PC-3 (cell line): ENCODE measurements at regions of chr6 and their contacts with region 1.

Region 1: GRCh38 chr6:55678330-55679224 is 99.6 kb upstream of the HMGCLL1 start:
- DNase-seq: no peak
- ATAC-seq: no peak
- H3K4me3 ChIP-seq: no peak overlapping the region
- H3K27ac ChIP-seq: no peak overlapping the region
- H3K4me1 ChIP-seq: peaks cover 8% of the 10 kb centered on the region
- H3K27me3 ChIP-seq: no peaks in the 10 kb centered on the region
- CTCF ChIP-seq: no peak

Region 2: DNA sequence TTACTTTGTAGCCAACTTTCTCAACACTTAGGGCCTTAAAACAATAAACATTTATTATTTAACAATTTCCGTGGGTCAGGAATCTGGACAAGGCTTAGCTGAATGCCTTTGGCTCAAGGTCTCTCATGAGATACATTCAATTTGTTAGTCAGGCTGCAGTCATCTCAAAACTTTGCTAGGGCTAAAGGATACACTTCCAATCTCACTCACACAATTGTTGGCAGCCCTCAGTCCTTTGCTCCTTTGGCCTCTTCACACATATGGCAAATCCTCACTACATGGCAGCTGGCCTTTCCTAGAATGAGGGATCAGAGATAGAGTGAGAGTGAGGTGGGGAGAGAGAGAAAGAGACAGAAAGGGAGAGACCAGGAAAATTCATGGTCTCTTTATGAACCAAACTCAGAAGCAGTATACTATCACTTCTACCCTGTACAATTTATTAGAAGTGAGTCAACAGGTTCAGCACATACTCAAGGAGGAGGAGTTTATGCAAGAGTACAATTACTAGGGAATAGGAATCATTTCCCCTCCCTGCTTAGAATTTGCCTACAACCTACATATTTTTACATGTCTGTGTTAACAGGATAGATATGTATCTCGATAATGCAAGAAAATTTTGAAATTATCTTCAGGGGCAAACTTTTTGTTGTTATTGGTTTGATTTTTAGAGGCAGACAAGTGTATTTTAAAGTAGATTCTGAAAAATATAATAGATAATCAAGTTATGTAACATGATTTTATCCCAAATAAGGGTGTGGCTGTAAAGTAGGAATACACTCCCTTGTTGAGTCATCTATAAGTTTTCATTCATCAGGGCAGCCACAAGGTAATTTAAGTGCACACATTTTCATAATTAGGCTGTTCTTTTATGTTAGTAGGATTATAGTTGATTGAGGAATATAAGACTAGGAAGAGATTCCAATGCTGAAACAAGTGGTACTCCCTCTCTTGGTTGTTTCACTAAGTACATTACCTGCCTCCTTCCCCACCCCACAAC is 13.7 kb before region 1 on chr6:
- CTCF ChIA-PET with region 1: no interaction called
- POLR2A ChIA-PET with region 1: no interaction called
- intact Hi-C with region 1: no loop called
- DNase-seq: peak; percentile 72
- ATAC-seq: peak; percentile 99
- H3K4me3 ChIP-seq: peak overlapping the region; percentile 13; the same call in 1 of the 2 replicates
- H3K27ac ChIP-seq: peak overlapping the region; percentile 85
- H3K4me1 ChIP-seq: peaks cover 15% of the 10 kb centered on the region
- H3K27me3 ChIP-seq: no peaks in the 10 kb centered on the region
- CTCF ChIP-seq: no peak

Region 3: DNA sequence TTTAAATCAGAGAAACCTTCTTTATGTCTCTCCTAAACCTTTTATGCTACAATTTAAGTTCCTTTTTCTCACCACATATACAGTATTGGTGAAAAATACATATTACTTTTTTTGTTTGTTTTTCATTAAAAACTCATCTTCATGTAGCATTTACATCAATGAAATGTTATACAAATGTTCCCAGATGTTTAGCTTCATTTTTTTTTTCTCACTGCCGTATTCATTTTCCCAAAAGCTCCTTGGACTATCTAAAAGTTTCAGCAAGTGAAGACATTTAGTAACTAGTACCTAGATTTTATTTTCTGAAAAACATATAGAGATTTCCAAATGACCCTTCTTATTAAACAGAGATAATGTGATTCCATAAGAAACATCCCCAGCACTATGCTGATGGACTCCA is 67.9 kb after region 1 on chr6:
- CTCF ChIA-PET with region 1: no interaction called
- POLR2A ChIA-PET with region 1: interaction called, 20 read pairs
- intact Hi-C with region 1: no loop called
- DNase-seq: no peak
- ATAC-seq: no peak
- H3K4me3 ChIP-seq: no peak overlapping the region
- H3K27ac ChIP-seq: no peak overlapping the region
- H3K4me1 ChIP-seq: no peaks in the 10 kb centered on the region
- H3K27me3 ChIP-seq: no peaks in the 10 kb centered on the region
- CTCF ChIP-seq: no peak